Activated CD8-positive, alpha-beta T cell treated with anti-CD3 and anti-CD28 coated beads for 36 hours (primary cell): ENCODE measurements at regions of chr5 and their contacts with region 1.

Region 1: GRCh38 chr5:157142317-157143126 is at the start of gene MED7:
- DNase-seq: peak; percentile 96
- ATAC-seq: peak; percentile 98
- H3K4me3 Mint-ChIP-seq: peak within 1 kb of the TSS; percentile 86
- H3K27ac Mint-ChIP-seq: peak within 1 kb of the TSS; percentile 98
- H3K4me1 Mint-ChIP-seq: peaks cover 39% of the 10 kb centered on the region
- H3K27me3 Mint-ChIP-seq: no peaks in the 10 kb centered on the region
- CTCF ChIP-seq: no peak
- total RNA-seq, gene MED7: 13.6 to 13.7 TPM

Region 2: GRCh38 chr5:156963125-156963524 is 179.4 kb before region 1 on chr5 and contains the start of gene TIMD4:
- CTCF ChIA-PET with region 1: no interaction called
- POLR2A ChIA-PET with region 1: no interaction called
- intact Hi-C with region 1: no loop called
- DNase-seq: no peak
- ATAC-seq: no peak
- H3K4me3 Mint-ChIP-seq: no peak within 1 kb of the TSS
- H3K27ac Mint-ChIP-seq: no peak within 1 kb of the TSS
- H3K4me1 Mint-ChIP-seq: no peaks in the 10 kb centered on the region
- H3K27me3 Mint-ChIP-seq: no peaks in the 10 kb centered on the region
- CTCF ChIP-seq: no peak
- total RNA-seq, gene TIMD4: 0.83 to 1.2 TPM

Region 3: GRCh38 chr5:157108976-157109375 is 33.5 kb before region 1 on chr5 and contains the start of gene HAVCR2:
- CTCF ChIA-PET with region 1: interaction called, 3 read pairs
- POLR2A ChIA-PET with region 1: interaction called, 10 read pairs
- intact Hi-C with region 1: no loop called
- DNase-seq: peak; percentile 88
- ATAC-seq: peak; percentile 91
- H3K4me3 Mint-ChIP-seq: peak within 1 kb of the TSS; percentile 78
- H3K27ac Mint-ChIP-seq: peak within 1 kb of the TSS; percentile 94
- H3K4me1 Mint-ChIP-seq: peaks cover 55% of the 10 kb centered on the region
- H3K27me3 Mint-ChIP-seq: no peaks in the 10 kb centered on the region
- CTCF ChIP-seq: no peak
- total RNA-seq, gene HAVCR2: 28.7 to 34.6 TPM

Region 4: DNA sequence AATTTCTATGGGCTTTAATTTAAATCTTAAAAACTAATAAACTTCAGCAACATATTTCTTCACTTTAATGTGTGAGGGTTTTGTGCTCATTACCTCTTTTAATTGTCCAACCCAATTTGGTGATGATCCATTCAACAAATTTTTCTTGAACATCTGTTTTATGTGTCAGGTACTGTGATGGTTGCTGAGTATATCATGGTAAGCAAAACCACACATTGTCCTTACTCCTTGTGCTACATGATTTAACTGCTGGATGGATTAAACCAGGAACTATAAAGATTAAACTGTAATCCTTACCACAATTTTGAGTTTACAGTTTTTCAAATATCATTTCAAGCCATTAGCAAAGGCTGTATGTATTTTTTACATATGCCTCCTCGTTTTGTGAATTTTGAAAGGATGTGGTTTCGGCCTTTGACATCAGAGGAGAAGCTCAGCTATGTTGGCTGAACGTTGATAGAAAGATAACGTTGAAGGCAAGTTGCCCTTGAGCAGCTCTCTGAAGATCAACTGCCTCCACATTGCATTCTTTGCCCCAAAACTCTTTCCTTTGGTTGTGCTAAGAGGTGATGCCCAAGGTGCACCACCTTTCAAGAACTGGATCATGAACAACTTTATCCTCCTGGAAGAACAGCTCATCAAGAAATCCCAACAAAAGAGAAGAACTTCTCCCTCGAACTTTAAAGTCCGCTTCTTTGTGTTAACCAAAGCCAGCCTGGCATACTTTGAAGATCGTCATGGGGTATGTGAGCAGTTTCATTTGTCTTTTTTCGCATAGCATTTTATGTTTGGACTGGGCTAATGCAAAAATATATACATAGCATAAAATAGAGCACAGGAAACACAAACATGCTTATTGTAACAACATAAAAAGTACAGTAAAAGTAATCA is 38.1 kb after region 1 on chr5 and contains the start of gene ITK:
- CTCF ChIA-PET with region 1: interaction called, 29 read pairs
- POLR2A ChIA-PET with region 1: interaction called, 280 read pairs
- intact Hi-C with region 1: no loop called
- DNase-seq: peak; percentile 59
- ATAC-seq: peak; percentile 62
- H3K4me3 Mint-ChIP-seq: peak within 1 kb of the TSS; percentile 99
- H3K27ac Mint-ChIP-seq: peak within 1 kb of the TSS; percentile 100
- H3K4me1 Mint-ChIP-seq: peaks cover 40% of the 10 kb centered on the region
- H3K27me3 Mint-ChIP-seq: no peaks in the 10 kb centered on the region
- CTCF ChIP-seq: no peak
- total RNA-seq, gene ITK: 229 to 236 TPM

Region 5: DNA sequence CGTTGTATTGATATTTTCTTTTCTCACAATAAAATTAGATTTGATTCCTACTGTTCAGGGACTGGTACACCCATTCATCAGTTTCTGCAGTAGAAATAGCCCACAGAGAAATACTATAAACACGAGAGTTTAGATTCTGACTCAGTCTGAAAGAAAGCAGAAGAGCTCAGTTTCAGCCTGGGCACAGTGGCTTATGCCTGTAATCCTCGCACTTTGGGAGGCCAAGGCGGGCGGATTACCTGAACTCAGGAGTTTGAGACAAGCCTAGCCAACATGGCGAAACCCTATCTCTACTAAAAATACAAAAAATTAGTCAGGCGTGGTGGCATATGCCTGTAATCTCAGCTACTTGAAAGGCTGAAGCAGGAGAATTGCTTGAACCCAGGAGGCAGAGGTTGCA is 46.7 kb after region 1 on chr5:
- CTCF ChIA-PET with region 1: interaction called, 80 read pairs
- POLR2A ChIA-PET with region 1: interaction called, 280 read pairs
- intact Hi-C with region 1: no loop called
- DNase-seq: peak; percentile 68
- ATAC-seq: peak; percentile 50
- H3K4me3 Mint-ChIP-seq: peak overlapping the region; percentile 99
- H3K27ac Mint-ChIP-seq: peak overlapping the region; percentile 94
- H3K4me1 Mint-ChIP-seq: peaks cover 56% of the 10 kb centered on the region
- H3K27me3 Mint-ChIP-seq: no peaks in the 10 kb centered on the region
- CTCF ChIP-seq: no peak